ENCODE measurements at regions of chr12 and their contacts with region 1.

Region 1: GRCh38 chr12:63843721-63844390 is 644 bp upstream of the SRGAP1 start:
- DNase-seq: peak; percentile 54
- H3K4me3 ChIP-seq: peak overlapping the region; percentile 96
- CTCF ChIP-seq: peak; percentile 98

Region 2: GRCh38 chr12:63919756-63920155 is 75.9 kb after region 1 on chr12:
- CTCF ChIA-PET with region 1: interaction called, 11 read pairs
- POLR2A ChIA-PET with region 1: no interaction called
- DNase-seq: no peak
- H3K4me3 ChIP-seq: no peak overlapping the region
- CTCF ChIP-seq: no peak

Region 3: GRCh38 chr12:64077922-64078321 is 234.1 kb after region 1 on chr12:
- CTCF ChIA-PET with region 1: interaction called, 13 read pairs
- POLR2A ChIA-PET with region 1: interaction called, 5 read pairs
- DNase-seq: no peak
- H3K4me3 ChIP-seq: no peak overlapping the region
- CTCF ChIP-seq: peak; percentile 28

Region 4: GRCh38 chr12:64181504-64182291 is 337.8 kb after region 1 on chr12:
- CTCF ChIA-PET with region 1: interaction called, 20 read pairs
- POLR2A ChIA-PET with region 1: interaction called, 14 read pairs
- DNase-seq: peak; percentile 89
- H3K4me3 ChIP-seq: peak overlapping the region; percentile 32
- CTCF ChIP-seq: peak; percentile 59

Region 5: GRCh38 chr12:64256166-64256800 is 412.4 kb after region 1 on chr12:
- CTCF ChIA-PET with region 1: interaction called, 187 read pairs
- POLR2A ChIA-PET with region 1: interaction called, 3 read pairs
- DNase-seq: no peak
- H3K4me3 ChIP-seq: no peak overlapping the region
- CTCF ChIP-seq: peak; percentile 39